Activated CD4-positive, alpha-beta T cell treated with anti-CD3 and anti-CD28 coated beads for 36 hours (primary cell): ENCODE measurements at regions of chr16 and their contacts with region 1.

Region 1: DNA sequence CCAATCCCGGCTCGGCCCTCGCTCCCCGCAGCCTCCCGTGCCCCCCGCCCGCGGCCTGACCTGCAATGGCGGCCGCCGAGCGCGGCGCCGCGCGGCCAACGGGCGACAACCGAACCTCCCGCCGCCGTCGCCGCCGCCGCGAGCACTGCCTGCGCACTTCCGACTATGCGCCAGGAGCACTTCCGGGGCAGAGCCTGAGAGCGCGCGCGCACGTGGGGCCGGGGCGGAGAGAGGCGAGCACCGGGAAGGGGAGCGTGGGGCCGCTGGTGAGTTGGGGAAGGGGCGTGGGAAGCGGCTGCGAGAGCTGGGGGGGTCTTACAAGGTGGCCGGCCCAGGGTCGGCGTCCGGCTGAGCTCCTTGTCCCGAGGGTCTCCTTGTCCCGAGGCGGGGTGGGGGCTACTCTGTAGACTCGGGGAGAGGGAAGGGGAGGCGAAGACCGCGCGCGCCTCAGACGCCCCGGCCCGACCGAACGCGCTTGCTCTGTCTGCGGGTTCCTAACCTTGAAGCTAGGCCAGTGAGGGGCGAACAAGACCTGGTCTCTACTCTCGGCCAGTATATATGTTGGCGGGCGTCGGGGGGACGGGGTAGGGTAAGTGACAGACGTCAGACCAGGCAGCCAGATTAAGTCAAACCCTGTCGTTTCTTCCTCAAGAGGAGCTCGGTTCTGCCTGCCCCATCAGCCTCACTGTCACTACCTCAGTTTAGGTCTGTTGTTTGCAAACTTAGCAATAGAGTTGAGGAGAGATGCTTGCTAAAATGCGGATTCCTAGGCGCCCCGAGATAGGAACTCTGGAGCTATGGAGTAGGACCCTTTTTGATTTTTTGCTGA is at the starts of genes CHTF8 and UTP4:
- DNase-seq: peak; percentile 94
- ATAC-seq: peak; percentile 95
- H3K4me3 Mint-ChIP-seq: peak within 1 kb of the TSS; percentile 93
- H3K27ac Mint-ChIP-seq: peak within 1 kb of the TSS; percentile 93
- H3K4me1 Mint-ChIP-seq: peaks cover 59% of the 10 kb centered on the region
- H3K27me3 Mint-ChIP-seq: no peaks in the 10 kb centered on the region
- total RNA-seq, gene CHTF8: 153 to 194 TPM
- total RNA-seq, gene UTP4: 102 to 119 TPM

Region 2: GRCh38 chr16:68538880-68539701 is 593.5 kb before region 1 on chr16 and contains the start of gene ZFP90:
- CTCF ChIA-PET with region 1: no interaction called
- POLR2A ChIA-PET with region 1: no interaction called
- intact Hi-C with region 1: loop called in 1 of 2 experiments (anchors 1 kb)
- DNase-seq: peak; percentile 93
- ATAC-seq: peak; percentile 96
- H3K4me3 Mint-ChIP-seq: peak within 1 kb of the TSS; percentile 89
- H3K27ac Mint-ChIP-seq: peak within 1 kb of the TSS; percentile 98
- H3K4me1 Mint-ChIP-seq: peaks cover 16% of the 10 kb centered on the region
- H3K27me3 Mint-ChIP-seq: no peaks in the 10 kb centered on the region
- total RNA-seq, gene ZFP90: 31.4 to 31.6 TPM

Region 3: DNA sequence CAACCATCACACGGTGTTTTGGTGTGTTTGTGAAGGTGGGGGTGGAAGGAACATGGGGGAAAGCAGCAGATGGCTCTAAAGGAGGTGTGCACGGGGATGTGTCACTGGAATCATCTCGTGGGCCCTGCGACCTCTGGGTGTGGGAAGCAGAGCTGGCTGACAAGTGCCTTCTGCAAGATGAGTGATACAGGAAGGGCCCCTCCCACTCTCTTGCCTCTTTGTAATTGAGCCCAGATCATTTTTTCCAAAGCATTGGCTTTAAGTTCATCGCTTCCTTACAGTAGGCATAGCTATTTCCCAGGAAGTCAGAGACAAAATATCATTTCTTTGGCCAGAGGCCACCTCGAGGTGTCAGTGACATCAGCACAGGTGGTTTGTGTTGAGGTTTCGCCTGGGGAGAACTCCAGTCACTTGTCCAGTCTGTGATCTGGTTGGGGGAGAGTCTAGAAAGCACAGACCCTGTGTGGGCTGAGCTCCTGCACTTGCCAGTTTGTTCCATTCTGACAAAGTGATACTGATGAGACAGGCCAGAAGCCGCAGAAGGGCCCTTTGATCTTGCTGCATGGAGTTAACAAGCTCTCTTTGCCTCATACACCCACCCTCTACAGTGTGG is 33.7 kb after region 1 on chr16:
- CTCF ChIA-PET with region 1: interaction called, 6 read pairs
- POLR2A ChIA-PET with region 1: interaction called, 3 read pairs
- intact Hi-C with region 1: loop called (anchors 1 kb)
- DNase-seq: peak; percentile 91
- ATAC-seq: peak; percentile 92
- H3K4me3 Mint-ChIP-seq: peak overlapping the region; percentile 32
- H3K27ac Mint-ChIP-seq: peak overlapping the region; percentile 87
- H3K4me1 Mint-ChIP-seq: peaks cover 52% of the 10 kb centered on the region
- H3K27me3 Mint-ChIP-seq: no peaks in the 10 kb centered on the region

Region 4: GRCh38 chr16:69330286-69331109 is 197.9 kb after region 1 on chr16 and contains the start of gene PDF:
- CTCF ChIA-PET with region 1: no interaction called
- POLR2A ChIA-PET with region 1: interaction called, 3 read pairs
- intact Hi-C with region 1: loop called in 1 of 2 experiments (anchors 1 kb)
- DNase-seq: peak; percentile 90
- ATAC-seq: peak; percentile 94
- H3K4me3 Mint-ChIP-seq: peak within 1 kb of the TSS; percentile 83
- H3K27ac Mint-ChIP-seq: peak within 1 kb of the TSS; percentile 84
- H3K4me1 Mint-ChIP-seq: peaks cover 45% of the 10 kb centered on the region
- H3K27me3 Mint-ChIP-seq: no peaks in the 10 kb centered on the region
- total RNA-seq, gene PDF: 10.1 to 19.9 TPM

Region 5: DNA sequence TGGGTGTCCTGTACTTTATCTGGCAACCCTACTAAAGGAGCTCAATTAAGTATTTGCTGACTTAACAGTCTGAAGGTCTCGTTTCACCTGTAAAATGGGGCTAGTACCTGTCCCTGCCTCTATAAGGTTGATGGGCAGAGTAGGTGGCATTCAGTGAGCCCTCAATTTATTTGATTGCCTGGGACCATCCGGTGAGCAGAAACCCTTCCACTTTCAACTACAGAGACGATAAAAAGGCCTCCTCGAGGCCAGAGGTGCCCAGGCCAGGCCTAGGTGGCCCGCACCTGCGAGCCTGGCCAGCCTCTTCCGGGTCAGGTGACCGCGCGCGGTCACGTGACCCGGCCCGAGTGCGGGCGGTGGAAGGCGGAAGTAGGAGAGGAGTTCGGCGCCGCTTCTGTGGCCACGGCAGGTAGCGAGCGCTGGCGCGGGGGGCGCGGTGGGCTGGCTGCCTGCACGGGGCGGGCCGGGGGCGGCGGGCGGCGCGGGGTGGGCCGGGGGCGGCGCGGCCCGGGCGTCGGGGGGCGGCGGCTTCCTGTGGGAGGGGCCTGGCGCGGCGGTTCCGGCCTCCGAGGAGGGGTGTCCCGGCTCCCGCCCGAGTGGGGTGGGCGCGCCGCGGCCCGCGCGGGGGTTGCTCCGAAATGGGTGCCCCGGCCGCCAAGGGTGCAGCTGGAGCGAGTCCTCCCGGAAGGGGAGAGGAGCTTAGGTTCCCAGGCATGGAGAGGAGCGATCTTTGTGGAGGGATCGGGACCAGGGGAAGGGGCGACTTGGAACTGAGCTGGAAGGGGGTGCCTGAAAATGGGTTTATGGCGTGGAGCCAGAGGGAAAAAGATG is 629.6 kb after region 1 on chr16 and contains the start of gene WWP2:
- CTCF ChIA-PET with region 1: interaction called, 3 read pairs
- POLR2A ChIA-PET with region 1: no interaction called
- intact Hi-C with region 1: loop called in 1 of 2 experiments (anchors 5 kb)
- DNase-seq: peak; percentile 86
- ATAC-seq: peak; percentile 76
- H3K4me3 Mint-ChIP-seq: peak within 1 kb of the TSS; percentile 91
- H3K27ac Mint-ChIP-seq: peak within 1 kb of the TSS; percentile 98
- H3K4me1 Mint-ChIP-seq: peaks cover 35% of the 10 kb centered on the region
- H3K27me3 Mint-ChIP-seq: no peaks in the 10 kb centered on the region
- total RNA-seq, gene WWP2: 43.3 to 44.6 TPM